ENCODE measurements at regions of chr3 and their contacts with region 1.

Region 1: DNA sequence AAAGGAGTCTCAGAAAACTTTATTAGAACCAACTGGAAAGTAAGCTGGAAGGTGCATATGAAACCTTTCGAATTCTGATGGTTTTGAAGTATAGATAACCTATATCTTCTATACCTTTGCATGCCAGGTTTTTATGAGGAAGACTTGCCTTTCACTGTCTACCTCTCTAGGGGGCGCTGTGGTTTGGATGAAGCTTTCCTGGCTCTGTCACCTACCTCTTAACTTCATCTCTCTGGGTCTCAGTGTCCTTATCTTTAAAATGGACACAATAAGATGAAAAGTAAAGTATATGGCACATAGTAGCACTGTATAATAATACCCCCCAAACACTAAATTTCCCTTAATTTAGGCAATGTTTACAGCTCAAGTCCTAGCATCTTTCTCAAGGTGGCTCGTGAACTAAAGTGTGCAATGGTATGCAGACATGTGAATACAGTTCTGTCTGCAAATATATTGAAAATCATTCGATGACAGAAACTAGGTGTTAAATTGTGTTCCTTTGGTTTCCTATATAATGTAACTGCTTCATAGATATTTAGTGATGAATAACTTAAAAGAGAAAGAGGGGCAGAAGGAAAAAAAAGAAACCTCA is 314.3 kb downstream of the CHST2 start:
- H3K4me3 Mint-ChIP-seq: no peak overlapping the region
- H3K27ac Mint-ChIP-seq: no peak overlapping the region
- H3K4me1 Mint-ChIP-seq: peaks cover 26% of the 10 kb centered on the region
- H3K27me3 Mint-ChIP-seq: no peaks in the 10 kb centered on the region

Region 2: GRCh38 chr3:143236226-143236964 is 197.5 kb before region 1 on chr3:
- intact Hi-C with region 1: no loop called
- H3K4me3 Mint-ChIP-seq: no peak overlapping the region
- H3K27ac Mint-ChIP-seq: no peak overlapping the region
- H3K4me1 Mint-ChIP-seq: peaks cover 18% of the 10 kb centered on the region
- H3K27me3 Mint-ChIP-seq: no peaks in the 10 kb centered on the region

Region 3: DNA sequence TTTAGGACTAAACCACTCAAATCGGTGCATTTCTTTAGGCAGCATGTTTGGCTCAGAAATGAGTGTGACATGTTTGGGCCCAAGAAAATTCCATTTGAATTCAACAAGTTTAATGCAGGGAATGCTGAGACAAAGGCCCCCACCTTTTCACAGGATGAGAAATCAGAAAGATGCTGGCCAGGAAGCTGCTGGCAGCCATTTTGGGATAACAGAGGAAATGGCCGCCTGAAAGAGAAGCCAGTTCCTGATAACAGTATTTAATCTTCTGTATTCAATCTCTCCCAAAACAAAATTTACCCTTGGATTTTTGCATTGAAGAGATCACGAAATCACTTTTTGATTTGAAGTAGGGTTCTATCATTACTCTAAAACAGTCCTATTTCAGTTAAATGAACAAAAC is 63.5 kb after region 1 on chr3:
- intact Hi-C with region 1: no loop called
- H3K4me3 Mint-ChIP-seq: no peak overlapping the region
- H3K27ac Mint-ChIP-seq: no peak overlapping the region
- H3K4me1 Mint-ChIP-seq: no peaks in the 10 kb centered on the region
- H3K27me3 Mint-ChIP-seq: no peaks in the 10 kb centered on the region

Region 4: GRCh38 chr3:143644370-143645089 is 210.6 kb after region 1 on chr3:
- intact Hi-C with region 1: loop called (anchors 2 kb)
- H3K4me3 Mint-ChIP-seq: no peak overlapping the region
- H3K27ac Mint-ChIP-seq: no peak overlapping the region
- H3K4me1 Mint-ChIP-seq: peaks cover 5% of the 10 kb centered on the region
- H3K27me3 Mint-ChIP-seq: no peaks in the 10 kb centered on the region

Region 5: GRCh38 chr3:143674100-143674968 is 240.5 kb after region 1 on chr3:
- intact Hi-C with region 1: loop called (anchors 10 kb)
- H3K4me3 Mint-ChIP-seq: no peak overlapping the region
- H3K27ac Mint-ChIP-seq: no peak overlapping the region
- H3K4me1 Mint-ChIP-seq: peaks cover 5% of the 10 kb centered on the region
- H3K27me3 Mint-ChIP-seq: no peaks in the 10 kb centered on the region

Measured in dendritic cell treated with granulocyte-macrophage colony-stimulating factor and Interleukin-4, amounts not matched to agents 40 ng/mL and 50 ng/mL, for 4 days (primary cell).